ENCODE measurements at regions of chr3 and their contacts with region 1.

Region 1: DNA sequence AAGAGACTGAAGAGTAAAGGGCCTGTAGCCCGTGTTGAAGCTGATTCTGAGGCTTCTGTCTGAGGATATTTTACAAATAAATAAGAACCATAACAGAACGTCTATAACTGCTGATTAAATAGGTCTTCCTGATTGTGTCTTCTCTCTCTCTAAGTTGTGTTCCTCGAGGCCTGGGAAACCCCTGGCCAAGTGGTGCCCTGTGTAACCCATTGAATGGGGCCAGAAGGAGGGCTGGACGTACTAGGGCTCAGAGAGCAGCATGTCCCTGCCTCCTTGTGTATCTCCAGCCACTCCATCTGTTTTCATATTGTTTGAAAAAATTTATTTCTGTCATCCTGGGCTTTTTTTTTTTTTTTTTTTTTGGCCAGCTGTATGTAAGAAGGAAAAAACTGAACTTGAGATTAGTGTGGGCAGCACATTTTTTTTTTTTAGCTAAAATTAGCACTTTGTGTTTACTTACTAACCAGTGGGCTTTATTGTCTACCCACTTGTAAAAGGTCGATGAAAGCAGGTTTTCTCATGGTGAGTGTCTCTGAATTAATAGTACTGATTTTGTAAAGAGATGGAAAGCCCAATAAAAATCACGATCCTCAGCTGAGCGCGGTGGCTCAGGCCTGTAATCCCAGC is 10.7 kb downstream of the DHX30 start:
- DNase-seq: no peak
- H3K4me3 ChIP-seq: no peak overlapping the region
- H3K27ac ChIP-seq: no peak overlapping the region
- H3K4me1 ChIP-seq: no peaks in the 10 kb centered on the region
- CTCF ChIP-seq: no peak

Region 2: GRCh38 chr3:47772788-47773187 is 40.9 kb before region 1 on chr3:
- CTCF ChIA-PET with region 1: no interaction called
- POLR2A ChIA-PET with region 1: no interaction called
- intact Hi-C with region 1: no loop called
- DNase-seq: no peak
- H3K4me3 ChIP-seq: no peak overlapping the region
- H3K27ac ChIP-seq: no peak overlapping the region
- H3K4me1 ChIP-seq: peaks cover 4% of the 10 kb centered on the region
- CTCF ChIP-seq: no peak

Region 3: GRCh38 chr3:47824541-47825473 is 11.1 kb after region 1 on chr3:
- CTCF ChIA-PET with region 1: interaction called, 5 read pairs
- POLR2A ChIA-PET with region 1: interaction called, 10 read pairs
- intact Hi-C with region 1: no loop called
- DNase-seq: peak; percentile 87
- H3K4me3 ChIP-seq: peak overlapping the region; percentile 98
- H3K27ac ChIP-seq: peak overlapping the region; percentile 24
- H3K4me1 ChIP-seq: peaks cover 20% of the 10 kb centered on the region
- CTCF ChIP-seq: peak; percentile 86

Region 4: DNA sequence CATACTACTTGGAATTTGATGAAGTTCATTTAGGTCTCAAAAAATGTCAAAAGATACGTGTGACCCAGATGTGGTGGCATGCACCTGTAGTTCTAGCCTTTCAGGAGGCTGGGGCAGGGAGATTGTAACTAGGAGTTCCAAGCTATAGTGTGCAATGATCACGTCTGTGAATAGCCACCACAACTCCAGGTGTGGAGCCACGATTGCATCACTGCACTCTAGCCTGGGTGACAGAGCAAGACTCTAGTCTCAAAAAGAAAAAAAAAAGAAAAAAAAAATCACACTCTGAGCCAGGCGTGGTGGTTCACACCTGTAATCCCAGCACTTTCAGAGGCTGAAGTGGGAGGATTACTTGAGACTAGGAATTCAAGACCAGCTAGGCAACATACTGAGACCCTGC is 188.3 kb after region 1 on chr3:
- CTCF ChIA-PET with region 1: no interaction called
- POLR2A ChIA-PET with region 1: no interaction called
- intact Hi-C with region 1: no loop called
- DNase-seq: no peak
- H3K4me3 ChIP-seq: no peak overlapping the region
- H3K27ac ChIP-seq: no peak overlapping the region
- H3K4me1 ChIP-seq: no peaks in the 10 kb centered on the region
- CTCF ChIP-seq: no peak

Measured in OCI-LY7 (cell line).